Right ventricle myocardium superior (tissue), 1 donor: ENCODE measurements at regions of chr19 and their contacts with region 1.

Region 1: GRCh38 chr19:8158411-8159074 is 9.2 kb upstream of the FBN3 start:
- DNase-seq: no peak
- ATAC-seq: peak; percentile 76

Region 2: GRCh38 chr19:7943444-7944176 is 214.9 kb before region 1 on chr19 and contains the start of gene TIMM44:
- intact Hi-C with region 1: loop called (anchors 10 kb)
- DNase-seq: peak; percentile 99
- ATAC-seq: peak; percentile 98
- total RNA-seq, gene TIMM44: 116 TPM

Region 3: GRCh38 chr19:8208922-8209461 is 50.4 kb after region 1 on chr19 and contains the start of gene CERS4:
- intact Hi-C with region 1: loop called (anchors 10 kb)
- DNase-seq: peak; percentile 87
- ATAC-seq: peak; percentile 96
- total RNA-seq, gene CERS4: 19.1 TPM

Region 4: GRCh38 chr19:8252922-8253589 is 94.5 kb after region 1 on chr19:
- intact Hi-C with region 1: loop called (anchors 2 kb)
- DNase-seq: peak; percentile 91
- ATAC-seq: peak; percentile 67